Activated naive CD8-positive, alpha-beta T cell treated with anti-CD3 and anti-CD28 coated beads, Interleukin-2, amount 10 ng/mL, durations not matched to agents 7 days and 5 days (primary cell): ENCODE measurements at regions of chr14 and their contacts with region 1.

Region 1: GRCh38 chr14:21455911-21456667 is at the start of gene CHD8:
- DNase-seq: peak; percentile 95
- ATAC-seq: peak; percentile 96
- H3K4me3 Mint-ChIP-seq: peak within 1 kb of the TSS; percentile 95
- H3K27ac Mint-ChIP-seq: peak within 1 kb of the TSS; percentile 98
- H3K4me1 Mint-ChIP-seq: peaks cover 22% of the 10 kb centered on the region
- H3K27me3 Mint-ChIP-seq: no peaks in the 10 kb centered on the region
- total RNA-seq, gene CHD8: 128 to 133 TPM

Region 2: GRCh38 chr14:21215130-21215878 is 240.8 kb before region 1 on chr14:
- POLR2A ChIA-PET with region 1: no interaction called
- DNase-seq: no peak
- ATAC-seq: no peak
- H3K4me3 Mint-ChIP-seq: peak overlapping the region; percentile 25
- H3K27ac Mint-ChIP-seq: peak overlapping the region; percentile 66
- H3K4me1 Mint-ChIP-seq: peaks cover 30% of the 10 kb centered on the region
- H3K27me3 Mint-ChIP-seq: no peaks in the 10 kb centered on the region

Region 3: DNA sequence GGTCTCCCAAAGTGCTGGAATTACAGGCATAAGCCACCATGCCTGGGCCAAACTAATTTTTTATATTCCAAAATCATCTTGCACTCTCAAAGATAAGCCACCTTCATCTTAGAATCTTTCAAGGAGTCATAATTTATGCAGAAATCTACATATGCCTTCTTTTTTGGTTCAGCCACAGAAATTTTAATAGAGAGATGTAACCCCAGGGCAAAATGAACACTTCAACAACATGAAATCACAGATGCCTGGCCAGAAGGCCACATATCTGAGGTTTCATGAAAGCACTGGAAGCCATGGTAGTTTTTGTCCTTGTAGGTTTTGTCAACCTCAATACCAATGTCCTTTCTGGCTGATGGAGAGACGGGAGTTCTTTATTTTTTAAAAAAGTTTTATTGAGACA is 82.1 kb before region 1 on chr14:
- POLR2A ChIA-PET with region 1: no interaction called
- DNase-seq: no peak
- ATAC-seq: no peak
- H3K4me3 Mint-ChIP-seq: no peak overlapping the region
- H3K27ac Mint-ChIP-seq: no peak overlapping the region
- H3K4me1 Mint-ChIP-seq: peaks cover 6% of the 10 kb centered on the region
- H3K27me3 Mint-ChIP-seq: no peaks in the 10 kb centered on the region

Region 4: GRCh38 chr14:21414137-21414631 is 41.9 kb before region 1 on chr14:
- POLR2A ChIA-PET with region 1: no interaction called
- DNase-seq: no peak
- ATAC-seq: no peak
- H3K4me3 Mint-ChIP-seq: no peak overlapping the region
- H3K27ac Mint-ChIP-seq: peak overlapping the region; percentile 33
- H3K4me1 Mint-ChIP-seq: peaks cover 3% of the 10 kb centered on the region
- H3K27me3 Mint-ChIP-seq: no peaks in the 10 kb centered on the region

Region 5: GRCh38 chr14:21437063-21437901 is 18.8 kb before region 1 on chr14:
- POLR2A ChIA-PET with region 1: interaction called, 81 read pairs
- DNase-seq: peak; percentile 95
- ATAC-seq: peak; percentile 98
- H3K4me3 Mint-ChIP-seq: peak overlapping the region; percentile 97
- H3K27ac Mint-ChIP-seq: peak overlapping the region; percentile 92
- H3K4me1 Mint-ChIP-seq: peaks cover 36% of the 10 kb centered on the region
- H3K27me3 Mint-ChIP-seq: no peaks in the 10 kb centered on the region

Region 6: DNA sequence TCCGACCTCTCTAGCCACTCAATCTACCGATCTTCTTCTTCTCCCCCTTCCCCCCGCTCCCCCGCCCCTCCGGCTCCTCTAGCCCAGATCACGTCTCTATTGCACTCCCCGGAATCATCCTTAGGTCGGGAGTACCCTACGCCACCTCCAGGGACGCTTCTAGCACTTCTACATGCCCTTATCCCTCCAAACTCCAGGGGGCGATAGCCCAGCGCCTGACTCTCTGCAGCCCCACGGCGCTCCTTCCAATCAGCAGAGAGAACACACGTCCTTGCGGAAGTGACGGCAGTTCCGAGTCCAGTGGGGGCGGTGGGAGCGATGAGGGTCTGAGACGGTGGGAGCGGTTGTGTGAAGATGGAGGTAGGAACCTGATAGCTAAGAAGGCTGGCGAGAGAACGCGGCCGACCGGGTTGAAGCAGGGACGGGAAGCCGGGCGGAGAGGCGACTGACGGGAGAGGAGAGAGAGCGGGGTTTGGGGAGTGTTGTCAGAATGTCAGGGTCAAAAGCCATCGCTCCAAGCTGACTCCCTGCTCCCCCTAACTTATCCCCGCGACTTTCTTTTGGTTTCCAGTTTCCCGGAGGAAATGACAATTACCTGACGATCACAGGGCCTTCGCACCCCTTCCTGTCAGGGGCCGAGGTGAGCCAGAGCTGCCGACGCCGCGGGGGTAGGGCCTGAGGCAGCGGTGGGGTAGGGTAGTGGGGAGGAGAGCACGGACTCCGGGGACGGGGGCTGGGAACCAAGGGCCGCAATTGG is 21.0 kb after region 1 on chr14 and contains the starts of genes RAB2B and TOX4:
- POLR2A ChIA-PET with region 1: interaction called, 30 read pairs
- DNase-seq: peak; percentile 89
- ATAC-seq: peak; percentile 99
- H3K4me3 Mint-ChIP-seq: peak within 1 kb of the TSS; percentile 100
- H3K27ac Mint-ChIP-seq: peak within 1 kb of the TSS; percentile 100
- H3K4me1 Mint-ChIP-seq: peaks cover 24% of the 10 kb centered on the region
- H3K27me3 Mint-ChIP-seq: no peaks in the 10 kb centered on the region
- total RNA-seq, gene RAB2B: 27.3 to 27.5 TPM
- total RNA-seq, gene TOX4: 76.7 to 79.7 TPM

Region 7: GRCh38 chr14:21518725-21519124 is 62.6 kb after region 1 on chr14:
- POLR2A ChIA-PET with region 1: no interaction called
- DNase-seq: no peak
- ATAC-seq: no peak
- H3K4me3 Mint-ChIP-seq: no peak overlapping the region
- H3K27ac Mint-ChIP-seq: no peak overlapping the region
- H3K4me1 Mint-ChIP-seq: no peaks in the 10 kb centered on the region
- H3K27me3 Mint-ChIP-seq: peaks cover 14% of the 10 kb centered on the region